CD4-positive, alpha-beta T cell (primary cell): ENCODE measurements at regions of chr16 and their contacts with region 1.

Region 1: DNA sequence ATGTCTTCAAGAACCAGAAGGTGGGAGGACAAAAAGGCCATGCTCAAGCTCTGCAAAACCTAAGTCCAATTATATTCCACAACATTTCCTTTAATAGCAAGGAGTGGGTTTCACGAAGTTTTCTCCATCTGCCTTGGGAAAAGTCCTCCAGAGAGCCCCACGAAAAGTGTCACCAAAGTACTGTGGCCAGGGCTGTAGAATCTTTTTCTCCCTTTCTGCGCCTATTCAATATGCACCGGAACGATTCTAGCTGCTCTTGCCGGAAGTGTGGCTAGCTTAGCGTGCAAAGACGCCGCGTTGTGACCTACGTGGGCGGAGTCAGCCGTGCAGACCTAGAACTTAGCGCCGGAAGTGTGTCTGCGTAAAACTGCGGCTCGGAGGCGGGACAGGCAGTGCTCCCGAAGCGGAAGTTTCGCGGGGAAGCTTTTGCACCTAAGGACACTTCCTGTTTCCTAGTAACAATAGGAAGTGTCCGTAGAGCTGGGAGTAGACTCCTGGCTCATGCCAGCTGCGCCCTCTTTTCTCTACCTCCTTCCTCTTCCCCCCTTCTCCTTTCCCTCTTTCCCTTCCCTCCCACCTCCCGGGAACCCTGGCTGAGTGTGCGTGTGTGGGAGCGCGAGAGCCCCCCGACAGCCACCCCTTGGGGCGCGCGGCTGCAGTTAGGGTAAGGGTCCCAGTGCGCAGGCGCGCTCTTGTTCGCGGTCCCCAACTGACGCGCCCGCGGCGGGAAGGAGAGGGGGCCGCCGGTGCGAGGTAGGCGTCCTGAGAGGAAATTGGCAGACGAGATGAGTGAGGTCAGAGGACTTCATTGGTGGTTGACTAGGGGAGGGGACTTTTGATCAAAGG is at the starts of genes ZNF646 and ZNF668:
- DNase-seq: peak; percentile 94 to 100 (median 97)
- ATAC-seq: peak; percentile 81
- H3K4me3 ChIP-seq: peak within 1 kb of the TSS; percentile 96
- H3K4me3 Mint-ChIP-seq: peak within 1 kb of the TSS; percentile 98
- H3K27ac ChIP-seq: peak within 1 kb of the TSS; percentile 93 to 95
- H3K27ac Mint-ChIP-seq: peak within 1 kb of the TSS; percentile 92
- H3K4me1 ChIP-seq: peaks cover 35% of the 10 kb centered on the region
- H3K4me1 Mint-ChIP-seq: peaks cover 34% of the 10 kb centered on the region
- H3K27me3 ChIP-seq: no peaks in the 10 kb centered on the region
- H3K27me3 Mint-ChIP-seq: no peaks in the 10 kb centered on the region
- CTCF ChIP-seq: no peak
- total RNA-seq, gene ZNF646: 14.3 to 16.6 TPM
- total RNA-seq, gene ZNF668: 4.5 to 6.0 TPM

Region 2: DNA sequence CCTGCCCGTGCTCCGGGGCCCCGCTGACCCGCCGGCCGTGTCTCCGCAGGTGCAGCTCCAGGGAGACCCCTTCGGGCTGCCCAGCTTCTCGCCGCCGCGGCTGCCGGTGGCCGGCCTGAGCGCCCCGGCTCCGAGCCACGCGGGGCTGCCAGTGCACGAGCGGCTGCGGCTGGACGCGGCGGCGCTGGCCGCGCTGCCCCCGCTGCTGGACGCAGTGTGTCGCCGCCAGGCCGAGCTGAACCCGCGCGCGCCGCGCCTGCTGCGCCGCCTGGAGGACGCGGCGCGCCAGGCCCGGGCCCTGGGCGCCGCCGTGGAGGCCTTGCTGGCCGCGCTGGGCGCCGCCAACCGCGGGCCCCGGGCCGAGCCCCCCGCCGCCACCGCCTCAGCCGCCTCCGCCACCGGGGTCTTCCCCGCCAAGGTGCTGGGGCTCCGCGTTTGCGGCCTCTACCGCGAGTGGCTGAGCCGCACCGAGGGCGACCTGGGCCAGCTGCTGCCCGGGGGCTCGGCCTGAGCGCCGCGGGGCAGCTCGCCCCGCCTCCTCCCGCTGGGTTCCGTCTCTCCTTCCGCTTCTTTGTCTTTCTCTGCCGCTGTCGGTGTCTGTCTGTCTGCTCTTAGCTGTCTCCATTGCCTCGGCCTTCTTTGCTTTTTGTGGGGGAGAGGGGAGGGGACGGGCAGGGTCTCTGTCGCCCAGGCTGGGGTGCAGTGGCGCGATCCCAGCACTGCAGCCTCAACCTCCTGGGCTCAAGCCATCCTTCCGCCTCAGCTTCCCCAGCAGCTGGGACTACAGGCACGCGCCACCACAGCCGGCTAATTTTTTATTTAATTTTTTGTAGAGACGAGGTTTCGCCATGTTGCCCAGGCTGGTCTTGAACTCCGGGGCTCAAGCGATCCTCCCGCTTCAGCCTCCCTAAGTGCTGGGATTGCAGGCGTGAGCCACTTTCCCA is 171.9 kb before region 1 on chr16:
- CTCF ChIA-PET with region 1: no interaction called
- POLR2A ChIA-PET with region 1: interaction called, 15 read pairs
- intact Hi-C with region 1: no loop called
- DNase-seq: peak in 12 of 14 experiments; percentile 25 to 83 (median 52)
- ATAC-seq: peak; percentile 85
- H3K4me3 ChIP-seq: peak overlapping the region; percentile 58
- H3K4me3 Mint-ChIP-seq: peak overlapping the region; percentile 97
- H3K27ac ChIP-seq: peak overlapping the region; percentile 67 to 81
- H3K27ac Mint-ChIP-seq: peak overlapping the region; percentile 87
- H3K4me1 ChIP-seq: peaks cover 44% of the 10 kb centered on the region
- H3K4me1 Mint-ChIP-seq: peaks cover 32% of the 10 kb centered on the region
- H3K27me3 ChIP-seq: no peaks in the 10 kb centered on the region
- H3K27me3 Mint-ChIP-seq: no peaks in the 10 kb centered on the region
- CTCF ChIP-seq: no peak

Region 3: DNA sequence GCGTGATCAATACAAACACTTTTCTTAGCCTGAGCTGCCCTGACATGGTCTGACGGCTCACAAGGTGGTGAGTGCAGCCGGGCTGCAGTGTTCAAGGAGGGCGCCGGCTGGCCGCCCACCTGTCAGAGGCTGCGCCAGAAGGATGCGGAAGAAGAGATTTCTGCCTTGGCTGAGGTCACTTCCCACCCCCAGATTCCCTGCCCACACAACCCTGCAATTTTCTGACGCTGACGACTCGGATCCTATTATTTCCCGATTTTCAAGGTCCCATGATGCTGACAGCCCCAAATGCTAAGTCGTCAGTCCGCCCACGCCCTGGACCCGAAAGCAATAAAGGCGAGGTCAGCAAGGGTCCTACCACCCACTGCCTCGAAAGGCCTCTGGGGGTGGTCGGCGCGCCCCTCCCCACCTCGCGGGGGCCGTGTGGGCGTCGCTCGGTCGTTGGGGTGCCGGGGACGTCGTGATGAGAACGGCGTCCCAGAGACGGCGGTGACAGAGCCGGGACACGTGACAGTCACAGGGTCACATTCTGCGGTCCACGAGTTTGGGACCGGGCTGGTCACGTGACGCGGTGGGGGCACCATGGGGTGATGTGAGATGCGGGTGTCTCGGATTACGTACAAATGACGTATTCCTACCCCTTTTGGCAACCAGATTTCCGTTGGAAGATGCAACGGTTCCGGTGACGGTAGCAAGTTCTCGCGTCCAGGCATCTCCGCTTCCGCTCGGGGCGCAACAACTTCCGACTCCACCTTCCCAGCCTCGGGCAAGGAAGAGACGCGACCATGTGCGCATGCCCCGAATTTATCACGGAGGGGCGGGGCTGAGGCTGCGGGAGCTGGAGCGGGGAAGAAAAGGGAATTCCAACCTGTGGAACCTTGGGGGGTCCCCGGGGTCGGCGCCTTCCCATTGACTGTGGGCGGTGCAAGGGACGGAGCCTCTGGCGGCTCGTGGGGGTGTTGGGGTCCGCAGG is 41.2 kb before region 1 on chr16 and contains the start of gene STX4:
- CTCF ChIA-PET with region 1: interaction called, 4 read pairs
- POLR2A ChIA-PET with region 1: interaction called, 41 read pairs
- intact Hi-C with region 1: loop called (anchors 1 kb)
- DNase-seq: peak; percentile 93 to 100 (median 96)
- ATAC-seq: peak; percentile 81
- H3K4me3 ChIP-seq: peak within 1 kb of the TSS; percentile 95
- H3K4me3 Mint-ChIP-seq: peak within 1 kb of the TSS; percentile 97
- H3K27ac ChIP-seq: peak within 1 kb of the TSS; percentile 93 to 96
- H3K27ac Mint-ChIP-seq: peak within 1 kb of the TSS; percentile 83
- H3K4me1 ChIP-seq: peaks cover 26% of the 10 kb centered on the region
- H3K4me1 Mint-ChIP-seq: peaks cover 27% of the 10 kb centered on the region
- H3K27me3 ChIP-seq: no peaks in the 10 kb centered on the region
- H3K27me3 Mint-ChIP-seq: no peaks in the 10 kb centered on the region
- CTCF ChIP-seq: no peak
- total RNA-seq, gene STX4: 54.1 to 55.2 TPM

Region 4: DNA sequence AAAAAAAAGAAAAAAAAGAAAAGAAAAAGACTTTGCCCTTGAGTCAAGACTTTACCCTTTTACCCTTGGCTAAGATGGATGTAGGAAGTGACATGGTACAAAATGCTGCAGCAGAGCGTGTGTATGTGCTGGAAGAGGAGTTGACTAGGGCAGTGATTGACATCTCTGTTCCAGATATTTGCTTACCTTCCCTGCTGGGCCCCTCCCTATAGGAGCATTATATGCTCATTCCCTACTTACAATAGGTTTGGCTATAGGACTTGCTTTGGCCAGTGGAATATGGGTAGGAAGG is 30.1 kb before region 1 on chr16:
- CTCF ChIA-PET with region 1: no interaction called
- POLR2A ChIA-PET with region 1: no interaction called
- intact Hi-C with region 1: no loop called
- DNase-seq: no peak
- ATAC-seq: no peak
- H3K4me3 ChIP-seq: no peak overlapping the region
- H3K4me3 Mint-ChIP-seq: no peak overlapping the region
- H3K27ac ChIP-seq: no peak overlapping the region
- H3K27ac Mint-ChIP-seq: no peak overlapping the region
- H3K4me1 ChIP-seq: no peaks in the 10 kb centered on the region
- H3K4me1 Mint-ChIP-seq: no peaks in the 10 kb centered on the region
- H3K27me3 ChIP-seq: no peaks in the 10 kb centered on the region
- H3K27me3 Mint-ChIP-seq: no peaks in the 10 kb centered on the region
- CTCF ChIP-seq: no peak

Region 5: DNA sequence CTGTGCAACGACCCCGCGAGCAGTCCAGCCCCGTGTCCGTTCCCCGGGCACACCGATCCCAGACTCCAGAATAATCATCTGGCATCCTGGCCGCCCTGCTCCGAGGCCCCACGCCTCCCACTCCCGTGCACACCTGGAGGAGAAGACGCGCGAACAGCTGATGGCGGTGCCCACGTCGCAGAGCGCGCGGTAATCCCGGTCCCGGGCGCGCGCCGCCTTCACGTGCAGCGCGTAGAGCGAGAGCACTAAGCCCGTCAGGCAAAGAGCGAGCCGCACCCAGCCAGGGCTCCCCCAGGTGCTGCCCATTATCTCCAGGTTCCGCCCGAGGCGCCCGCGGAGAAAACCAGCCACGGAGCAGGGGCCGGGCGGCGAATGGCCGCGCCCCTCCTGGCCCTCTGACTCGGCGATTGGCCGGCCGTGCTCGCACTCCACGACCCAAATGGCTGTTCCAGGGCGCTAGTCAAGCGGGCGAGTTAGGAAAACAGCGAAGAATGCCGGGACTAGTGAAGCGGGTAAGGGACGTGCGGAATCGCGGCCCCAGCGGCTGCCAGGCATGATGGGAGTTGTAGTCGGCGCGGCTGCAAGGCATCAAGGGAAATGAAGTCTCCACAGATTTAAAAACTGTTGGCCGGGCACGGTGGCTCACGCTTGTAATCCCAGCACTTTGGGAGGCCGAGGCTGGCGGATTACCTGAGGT is 20.4 kb after region 1 on chr16 and contains the start of gene VKORC1:
- CTCF ChIA-PET with region 1: interaction called, 10 read pairs
- POLR2A ChIA-PET with region 1: interaction called, 35 read pairs
- intact Hi-C with region 1: loop called (anchors 1 to 2 kb)
- DNase-seq: peak; percentile 75 to 95 (median 82)
- ATAC-seq: peak; percentile 90
- H3K4me3 ChIP-seq: peak within 1 kb of the TSS; percentile 82
- H3K4me3 Mint-ChIP-seq: peak within 1 kb of the TSS; percentile 93
- H3K27ac ChIP-seq: peak within 1 kb of the TSS; percentile 84
- H3K27ac Mint-ChIP-seq: peak within 1 kb of the TSS; percentile 83
- H3K4me1 ChIP-seq: peaks cover 31% of the 10 kb centered on the region
- H3K4me1 Mint-ChIP-seq: peaks cover 34% of the 10 kb centered on the region
- H3K27me3 ChIP-seq: no peaks in the 10 kb centered on the region
- H3K27me3 Mint-ChIP-seq: no peaks in the 10 kb centered on the region
- CTCF ChIP-seq: no peak
- total RNA-seq, gene VKORC1: 19.0 to 19.2 TPM

Region 6: DNA sequence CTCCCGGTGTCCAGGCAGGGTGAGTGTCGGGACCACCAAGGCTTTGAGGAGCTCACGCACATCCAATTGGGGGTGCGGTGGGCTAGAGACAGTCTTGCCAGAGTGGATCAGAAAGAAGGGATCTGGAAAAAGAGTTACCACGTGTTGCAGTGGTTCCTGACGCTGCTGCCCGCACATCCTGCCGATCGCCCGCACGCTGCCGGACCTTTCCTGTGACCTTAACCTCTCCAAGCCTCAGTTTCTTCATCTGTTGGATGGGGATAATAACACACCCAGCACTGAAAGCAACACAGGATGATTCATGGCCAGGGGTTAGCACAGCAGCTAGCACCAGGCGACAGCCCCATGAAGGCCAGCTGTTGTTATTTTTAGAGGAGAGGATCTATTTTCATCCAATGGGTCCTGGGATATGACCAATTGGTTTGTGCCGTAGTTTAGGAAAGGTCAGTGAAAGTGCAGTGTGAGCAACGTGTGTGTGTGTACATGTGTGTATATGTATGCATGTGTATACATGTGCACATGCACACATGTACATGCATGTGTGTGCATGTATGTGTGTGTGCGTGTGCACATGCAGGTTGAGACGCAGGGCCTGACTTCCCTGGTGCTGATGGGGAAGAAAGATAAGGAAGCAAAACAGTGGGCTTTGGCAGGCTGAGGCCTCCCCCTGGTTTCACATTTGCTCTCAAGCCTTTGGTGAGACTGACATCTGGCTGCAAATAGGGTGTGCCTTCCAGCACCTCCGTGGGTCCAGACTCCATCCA is 283.3 kb after region 1 on chr16:
- CTCF ChIA-PET with region 1: no interaction called
- POLR2A ChIA-PET with region 1: no interaction called
- intact Hi-C with region 1: no loop called
- DNase-seq: peak in 2 of 14 experiments; percentile 36
- ATAC-seq: no peak
- H3K4me3 ChIP-seq: no peak overlapping the region
- H3K4me3 Mint-ChIP-seq: no peak overlapping the region
- H3K27ac ChIP-seq: no peak overlapping the region
- H3K27ac Mint-ChIP-seq: no peak overlapping the region
- H3K4me1 ChIP-seq: peaks cover 21% of the 10 kb centered on the region
- H3K4me1 Mint-ChIP-seq: peaks cover 17% of the 10 kb centered on the region
- H3K27me3 ChIP-seq: no peaks in the 10 kb centered on the region
- H3K27me3 Mint-ChIP-seq: no peaks in the 10 kb centered on the region
- CTCF ChIP-seq: no peak

Region 7: DNA sequence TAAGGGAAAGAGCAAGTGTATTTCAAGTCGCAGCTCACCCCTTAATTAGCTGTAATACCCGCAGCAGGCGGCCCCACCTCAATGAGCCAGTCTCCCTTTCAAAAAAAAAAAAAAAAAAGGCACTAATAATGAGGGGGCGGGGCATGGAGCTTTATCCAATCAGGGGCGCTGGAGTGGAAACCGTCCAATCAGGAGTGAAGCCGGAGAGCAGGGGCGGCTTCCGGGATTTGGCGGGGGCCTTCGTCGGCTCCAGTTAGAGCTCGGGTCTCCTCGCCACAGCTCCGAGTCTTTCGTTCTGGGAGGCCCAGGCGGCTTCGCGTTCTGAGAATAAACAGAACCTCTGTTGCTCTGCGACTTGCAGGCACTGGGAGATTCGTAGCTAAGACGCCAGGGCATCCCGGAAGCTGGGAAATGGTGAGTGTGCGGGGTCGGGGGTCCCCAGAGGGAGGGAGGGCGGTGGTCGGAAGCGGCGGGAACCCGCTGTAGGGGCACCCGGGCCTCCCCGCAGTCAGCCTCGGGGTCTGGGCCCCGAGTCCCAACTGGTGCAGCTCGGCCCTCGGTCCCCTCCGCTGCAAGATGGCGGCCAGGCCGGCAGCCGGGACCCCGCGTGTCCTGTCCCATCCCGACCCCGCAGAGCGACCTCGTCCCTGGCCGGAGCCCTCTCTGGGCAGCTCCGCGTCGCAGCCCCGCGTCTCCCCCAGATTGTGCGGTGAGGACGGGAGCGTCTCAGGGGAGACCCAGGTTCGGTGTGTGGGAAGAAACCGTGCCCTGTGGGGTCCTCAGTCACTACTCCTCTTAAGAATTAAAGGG is 799.6 kb after region 1 on chr16 and contains the start of gene ZNF267:
- CTCF ChIA-PET with region 1: no interaction called
- POLR2A ChIA-PET with region 1: interaction called, 11 read pairs
- intact Hi-C with region 1: loop called in 1 of 2 experiments (anchors 5 kb)
- DNase-seq: peak; percentile 88 to 97 (median 92)
- ATAC-seq: peak; percentile 69
- H3K4me3 ChIP-seq: peak within 1 kb of the TSS; percentile 84
- H3K4me3 Mint-ChIP-seq: peak within 1 kb of the TSS; percentile 98
- H3K27ac ChIP-seq: peak within 1 kb of the TSS; percentile 82 to 94
- H3K27ac Mint-ChIP-seq: peak within 1 kb of the TSS; percentile 74
- H3K4me1 ChIP-seq: peaks cover 80% of the 10 kb centered on the region
- H3K4me1 Mint-ChIP-seq: peaks cover 72% of the 10 kb centered on the region
- H3K27me3 ChIP-seq: no peaks in the 10 kb centered on the region
- H3K27me3 Mint-ChIP-seq: no peaks in the 10 kb centered on the region
- CTCF ChIP-seq: no peak
- total RNA-seq, gene ZNF267: 56.0 to 57.9 TPM